ENCODE measurements at regions of chr3 and their contacts with region 1.

Region 1: DNA sequence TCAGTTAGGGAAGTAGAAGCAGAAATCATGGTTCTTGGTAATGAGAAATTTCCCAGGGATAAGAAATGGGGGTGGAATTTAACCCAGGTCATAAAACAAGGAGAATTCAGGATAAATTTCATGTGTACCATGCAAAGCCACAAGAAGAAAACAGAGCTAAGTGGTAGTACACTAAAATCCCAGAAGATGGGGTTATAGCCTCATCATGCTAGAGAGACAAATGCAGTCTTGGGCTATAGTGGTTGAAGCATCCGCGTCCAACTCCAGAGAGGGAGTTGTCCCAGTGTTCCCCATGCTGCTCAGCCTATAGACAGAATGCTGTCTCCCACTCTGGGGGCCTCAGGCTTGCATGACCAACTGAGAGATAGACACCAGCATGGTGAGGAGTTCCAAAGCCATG is 36.2 kb upstream of the CLRN1 start:
- DNase-seq: peak; percentile 8 to 33
- ATAC-seq: peak; percentile 71 to 74; a peak in 5 of 6 replicates
- H3K4me3 ChIP-seq: no peak overlapping the region
- H3K27ac ChIP-seq: no peak overlapping the region
- H3K4me1 ChIP-seq: no peaks in the 10 kb centered on the region
- CTCF ChIP-seq: peak; percentile 15; the same call in 1 of the 3 replicates
- EP300 ChIP-seq: no peak
- POLR2A ChIP-seq: no peak
- RAD21 ChIP-seq: peak; percentile 35 to 52; a peak in 4 of 5 replicates

Region 2: DNA sequence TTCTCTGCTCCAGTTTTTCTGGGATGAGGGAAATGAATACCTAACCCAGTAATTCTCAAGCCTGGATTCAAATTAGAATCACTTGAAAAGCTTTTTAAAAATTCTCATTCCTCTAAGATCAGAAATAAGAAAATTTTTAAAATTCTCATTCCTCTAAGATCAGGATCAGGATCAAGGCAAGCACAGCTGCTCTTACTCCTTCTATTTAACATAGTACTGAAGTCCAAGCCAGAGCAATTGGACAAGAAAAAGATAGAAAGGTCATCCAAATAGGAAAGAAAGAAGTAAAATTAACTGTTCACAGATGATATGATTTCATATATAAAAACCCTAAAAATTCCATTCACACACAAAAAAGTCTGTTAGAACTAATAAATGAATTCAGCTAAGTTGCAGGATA is 12.0 kb before region 1 on chr3:
- CTCF ChIA-PET with region 1: interaction called, 12 read pairs
- POLR2A ChIA-PET with region 1: no interaction called
- DNase-seq: no peak
- ATAC-seq: no peak
- H3K4me3 ChIP-seq: no peak overlapping the region
- H3K27ac ChIP-seq: no peak overlapping the region
- H3K4me1 ChIP-seq: no peaks in the 10 kb centered on the region
- CTCF ChIP-seq: no peak
- EP300 ChIP-seq: no peak
- POLR2A ChIP-seq: no peak
- RAD21 ChIP-seq: no peak

Region 3: DNA sequence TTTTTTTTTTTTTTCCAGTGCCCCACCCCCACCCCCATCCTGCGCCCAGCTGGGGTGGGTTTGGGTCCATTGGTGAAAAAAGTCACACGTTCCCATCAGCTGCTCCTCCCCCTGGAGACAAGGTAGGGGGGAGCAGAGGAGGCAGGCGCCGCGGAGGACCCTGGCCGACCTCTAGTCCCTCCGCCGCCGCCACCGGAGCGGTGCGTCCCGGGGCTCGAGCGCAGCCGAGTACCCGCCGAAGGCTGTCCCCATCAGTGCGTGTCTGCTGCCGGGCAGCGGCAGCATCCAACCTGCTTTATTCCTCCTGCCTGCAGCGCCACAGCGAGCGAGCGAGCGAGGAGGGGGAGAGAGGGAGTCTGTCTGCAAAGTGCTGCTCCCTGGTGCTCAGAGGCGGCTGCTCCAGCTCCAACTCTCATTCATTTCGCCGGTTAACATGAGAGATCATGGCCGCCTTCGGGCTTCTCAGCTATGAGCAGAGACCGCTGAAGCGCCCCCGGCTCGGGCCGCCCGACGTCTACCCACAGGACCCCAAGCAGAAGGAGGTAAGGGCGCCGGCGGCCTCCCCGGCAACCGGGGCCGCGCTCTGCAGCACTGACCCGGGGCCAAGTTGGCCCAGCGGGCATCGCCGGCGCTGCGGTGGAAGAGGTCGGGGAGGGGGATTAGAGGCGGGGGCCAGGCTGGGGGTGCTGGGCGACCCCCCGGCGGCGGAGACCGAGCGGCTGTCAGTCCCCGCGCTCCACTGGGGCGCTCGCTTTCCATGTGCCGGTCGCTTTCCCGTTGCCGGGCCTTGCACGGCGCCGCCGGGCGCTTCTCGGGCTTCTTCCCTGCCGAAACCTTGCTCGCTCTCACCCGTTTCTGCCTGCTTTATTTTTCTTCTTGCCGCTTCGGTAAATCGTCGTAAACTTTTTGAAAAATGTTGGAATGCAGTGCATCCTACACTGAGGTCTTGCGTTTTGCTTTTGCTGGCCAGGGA is 78.1 kb after region 1 on chr3:
- CTCF ChIA-PET with region 1: interaction called, 17 read pairs
- POLR2A ChIA-PET with region 1: no interaction called
- DNase-seq: peak; percentile 83 to 88
- ATAC-seq: peak; percentile 88 to 93
- H3K4me3 ChIP-seq: peak overlapping the region; percentile 70
- H3K27ac ChIP-seq: peak overlapping the region; percentile 43 to 81; a peak in 5 of 6 replicates
- H3K4me1 ChIP-seq: no peaks in the 10 kb centered on the region
- CTCF ChIP-seq: peak; percentile 46
- EP300 ChIP-seq: no peak
- POLR2A ChIP-seq: no peak
- RAD21 ChIP-seq: peak; percentile 31 to 46; a peak in 3 of 5 replicates

Region 4: DNA sequence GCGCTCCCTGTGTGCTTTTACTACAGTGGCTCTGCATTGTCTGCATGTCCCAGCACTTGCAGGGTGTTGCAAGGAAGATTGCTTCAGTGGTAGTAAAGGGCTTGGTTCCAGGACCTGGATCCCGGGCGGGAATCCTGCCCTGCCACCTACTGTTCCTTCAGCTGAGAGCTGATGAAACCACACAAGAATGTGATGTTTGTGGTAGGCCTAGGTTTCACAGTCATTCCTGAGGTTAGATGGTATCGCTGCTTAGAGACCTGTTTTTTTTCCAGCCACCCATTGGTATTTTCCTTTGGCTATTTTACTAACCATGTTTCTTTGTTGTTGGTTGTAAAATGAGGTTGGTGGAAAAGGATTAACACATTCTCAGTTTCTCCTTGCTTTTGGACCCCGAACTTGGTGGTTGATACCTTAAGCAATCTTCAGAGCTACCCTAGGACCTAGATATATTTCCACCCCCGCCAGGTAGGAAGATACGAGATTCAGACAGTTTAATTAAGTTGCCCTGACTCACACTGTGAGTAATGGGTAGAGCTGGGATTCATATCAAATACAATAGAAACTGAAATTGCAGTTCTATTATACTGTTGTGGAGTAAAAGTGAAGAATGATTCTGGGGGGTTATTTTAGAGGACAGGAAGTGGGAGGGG is 296.5 kb after region 1 on chr3:
- CTCF ChIA-PET with region 1: no interaction called
- POLR2A ChIA-PET with region 1: no interaction called
- DNase-seq: peak; percentile 61 to 82
- ATAC-seq: peak; percentile 97
- H3K4me3 ChIP-seq: no peak overlapping the region
- H3K27ac ChIP-seq: peak overlapping the region; percentile 72 to 84
- H3K4me1 ChIP-seq: peaks cover 26% of the 10 kb centered on the region
- CTCF ChIP-seq: peak; percentile 28; the same call in 1 of the 3 replicates
- EP300 ChIP-seq: peak in 1 of 2 experiments; percentile 40; a peak in 1 of 5 replicates
- POLR2A ChIP-seq: no peak
- RAD21 ChIP-seq: peak; percentile 37 to 46